ENCODE measurements at regions of chr20 and their contacts with region 1.

Region 1: GRCh38 chr20:8315639-8316573 is 183.8 kb downstream of the PLCB1 start:
- H3K4me3 ChIP-seq: no peak overlapping the region
- H3K27ac ChIP-seq: no peak overlapping the region
- H3K4me1 ChIP-seq: peaks cover 1% of the 10 kb centered on the region
- CTCF ChIP-seq: no peak

Region 2: GRCh38 chr20:8305449-8305978 is 10.4 kb before region 1 on chr20:
- CTCF ChIA-PET with region 1: interaction called, 12 read pairs
- POLR2A ChIA-PET with region 1: no interaction called
- H3K4me3 ChIP-seq: no peak overlapping the region
- H3K27ac ChIP-seq: no peak overlapping the region
- H3K4me1 ChIP-seq: no peaks in the 10 kb centered on the region; the same call in 1 of the 2 replicates
- CTCF ChIP-seq: no peak; the same call in 1 of the 2 replicates